ENCODE measurements at regions of chr17 and their contacts with region 1.

Region 1: GRCh38 chr17:5111402-5112204 is at the start of gene ZNF232:
- DNase-seq: peak; percentile 88 to 96
- H3K4me3 ChIP-seq: peak within 1 kb of the TSS; percentile 70 to 79 (median 74)
- H3K27ac ChIP-seq: peak within 1 kb of the TSS; percentile 35; the same call in 1 of the 2 replicates
- H3K4me1 ChIP-seq: peaks cover 0 to 5% (median 2%) of the 10 kb centered on the region in 4 experiments; a peak in 2 of 7 replicates
- H3K27me3 ChIP-seq: no peaks in the 10 kb centered on the region
- CTCF ChIP-seq: 0 out of 4 replicates have a peak, but pooled peaks of 1 of the 3 experiments have one; percentile 5
- EP300 ChIP-seq: 0 out of 3 replicates have a peak, but pooled peaks of 1 of the 2 experiments have one; percentile 2
- POLR2A ChIP-seq: peak; percentile 71 to 88
- RAD21 ChIP-seq: no peak
- total RNA-seq, gene ZNF232: 39.8 and 41.0 TPM in 2 replicates

Region 2: DNA sequence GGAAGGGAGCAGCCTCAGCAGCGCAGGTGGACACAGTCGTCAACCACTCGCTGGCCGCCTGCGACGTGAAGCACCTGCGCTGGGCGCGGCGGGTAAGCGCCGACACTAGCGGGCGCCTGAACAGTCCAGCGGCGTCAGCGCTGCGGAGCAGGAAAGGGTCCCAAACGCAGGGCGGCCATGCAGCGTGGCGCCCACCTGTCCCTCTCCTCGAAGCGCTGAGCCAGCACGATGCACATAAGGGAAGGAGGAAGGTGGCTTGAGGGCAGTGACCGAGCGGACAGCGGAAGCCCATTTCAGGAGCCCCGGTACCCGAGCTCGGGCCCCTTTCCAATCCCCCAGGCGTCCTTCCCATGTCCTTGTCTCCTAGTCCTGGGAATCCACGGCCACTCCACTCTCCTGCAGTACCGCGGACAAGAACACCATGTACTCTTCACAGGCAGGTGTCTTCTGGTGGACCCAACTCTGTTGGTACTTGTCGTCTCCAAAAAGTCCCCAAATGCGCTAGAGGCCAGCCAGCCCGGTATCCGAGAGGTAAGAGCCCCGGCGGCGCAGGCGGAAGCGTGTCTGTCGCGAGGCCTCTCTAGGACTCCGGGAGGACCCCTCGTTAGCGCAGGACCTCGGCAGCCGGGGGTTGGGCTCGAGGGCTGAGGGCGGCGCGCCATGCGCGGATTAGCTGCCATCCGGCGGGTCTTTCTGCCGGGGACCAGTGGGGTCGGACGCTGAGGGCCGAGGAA is 14.3 kb before region 1 on chr17:
- CTCF ChIA-PET with region 1: interaction called, 4 read pairs
- POLR2A ChIA-PET with region 1: interaction called, 20 read pairs
- DNase-seq: peak; percentile 69 to 91
- H3K4me3 ChIP-seq: peak overlapping the region; percentile 59 to 79 (median 64)
- H3K27ac ChIP-seq: no peak overlapping the region
- H3K4me1 ChIP-seq: no peaks in the 10 kb centered on the region
- H3K27me3 ChIP-seq: peaks cover 0 to 15% (median 9%) of the 10 kb centered on the region in 4 experiments; a peak in 6 of 7 replicates
- CTCF ChIP-seq: no peak
- EP300 ChIP-seq: no peak
- POLR2A ChIP-seq: no peak; a peak in 1 of 3 replicates
- RAD21 ChIP-seq: 0 out of 4 replicates have a peak, but pooled peaks of 1 of the 2 experiments have one; percentile 10

Region 3: DNA sequence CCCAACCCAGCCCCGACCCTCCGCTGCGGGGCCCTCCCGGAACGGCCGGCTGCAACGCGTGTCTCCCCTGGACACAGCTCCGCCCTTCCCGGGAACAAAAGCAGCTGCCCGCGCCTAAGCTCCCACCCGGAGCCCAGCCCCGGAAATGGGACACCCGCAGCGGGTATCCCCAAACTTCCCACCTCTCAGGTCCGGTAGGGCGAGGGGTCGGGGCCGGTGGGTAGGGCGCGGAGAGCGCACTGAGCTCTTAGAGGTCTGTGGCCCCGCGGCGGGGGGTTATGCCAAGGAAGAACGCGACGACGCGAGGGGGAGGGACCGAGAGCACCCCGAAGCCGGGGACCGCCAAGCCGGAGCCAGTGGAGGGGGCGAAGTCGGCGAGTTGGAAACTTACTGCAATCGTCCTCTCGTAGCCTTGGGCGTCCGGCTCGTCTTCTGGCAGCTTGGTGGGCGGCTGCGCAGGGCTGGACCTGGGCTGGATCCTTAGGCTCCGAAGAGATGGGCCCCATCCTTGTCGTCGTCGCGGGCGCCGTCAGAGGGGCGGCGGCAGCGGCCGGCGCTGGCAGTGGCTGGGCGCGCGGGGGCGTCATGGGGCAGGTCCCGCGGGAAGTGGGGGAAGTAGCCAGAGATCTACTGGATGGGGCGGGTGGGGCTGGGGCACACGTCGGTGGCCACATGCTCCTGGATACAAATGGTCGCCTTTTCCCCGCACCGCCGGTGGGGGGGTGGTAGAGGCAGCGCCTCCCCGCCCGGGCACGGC is 11.2 kb after region 1 on chr17:
- CTCF ChIA-PET with region 1: interaction called, 3 read pairs
- POLR2A ChIA-PET with region 1: interaction called, 28 read pairs
- DNase-seq: peak in 1 of 2 experiments; percentile 75
- H3K4me3 ChIP-seq: peak overlapping the region; percentile 54 to 74 (median 60)
- H3K27ac ChIP-seq: no peak overlapping the region
- H3K4me1 ChIP-seq: peaks cover 0 to 5% (median 2%) of the 10 kb centered on the region in 4 experiments; a peak in 3 of 7 replicates
- H3K27me3 ChIP-seq: peaks cover 0 to 26% (median 15%) of the 10 kb centered on the region in 4 experiments; a peak in 6 of 7 replicates
- CTCF ChIP-seq: 0 out of 4 replicates have a peak, but pooled peaks of 1 of the 3 experiments have one; percentile 1
- EP300 ChIP-seq: no peak
- POLR2A ChIP-seq: no peak
- RAD21 ChIP-seq: no peak

Region 4: GRCh38 chr17:5164436-5164835 is 52.8 kb after region 1 on chr17:
- CTCF ChIA-PET with region 1: no interaction called
- POLR2A ChIA-PET with region 1: no interaction called
- DNase-seq: no peak
- H3K4me3 ChIP-seq: no peak overlapping the region
- H3K27ac ChIP-seq: no peak overlapping the region
- H3K4me1 ChIP-seq: no peaks in the 10 kb centered on the region
- H3K27me3 ChIP-seq: no peaks in the 10 kb centered on the region
- CTCF ChIP-seq: no peak
- EP300 ChIP-seq: no peak
- POLR2A ChIP-seq: no peak
- RAD21 ChIP-seq: no peak

Region 5: DNA sequence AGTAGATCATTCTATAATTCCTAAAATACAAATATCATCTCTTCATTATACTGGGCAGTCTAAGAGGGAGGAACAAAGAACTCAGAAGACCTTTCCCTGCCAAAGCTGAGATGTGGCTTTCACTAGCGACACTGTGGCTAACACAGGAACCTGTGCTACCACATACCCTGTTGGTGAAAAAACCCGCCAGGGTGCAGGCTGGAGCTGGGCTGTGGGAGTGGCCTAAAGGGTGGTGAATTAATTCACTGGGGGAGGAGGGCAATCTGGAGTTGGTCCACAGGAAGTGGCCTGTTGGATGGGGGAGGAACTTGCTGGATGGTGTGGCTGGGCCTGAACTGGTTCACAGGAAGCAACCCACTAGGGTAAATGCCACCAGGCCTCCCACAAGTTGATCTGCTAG is 72.7 kb after region 1 on chr17:
- CTCF ChIA-PET with region 1: interaction called, 3 read pairs
- POLR2A ChIA-PET with region 1: interaction called, 10 read pairs
- DNase-seq: no peak
- H3K4me3 ChIP-seq: peak overlapping the region in 1 of 4 experiments; percentile 18; a peak in 1 of 8 replicates
- H3K27ac ChIP-seq: no peak overlapping the region
- H3K4me1 ChIP-seq: no peaks in the 10 kb centered on the region
- H3K27me3 ChIP-seq: no peaks in the 10 kb centered on the region
- CTCF ChIP-seq: no peak
- EP300 ChIP-seq: no peak
- POLR2A ChIP-seq: no peak
- RAD21 ChIP-seq: no peak

Region 6: DNA sequence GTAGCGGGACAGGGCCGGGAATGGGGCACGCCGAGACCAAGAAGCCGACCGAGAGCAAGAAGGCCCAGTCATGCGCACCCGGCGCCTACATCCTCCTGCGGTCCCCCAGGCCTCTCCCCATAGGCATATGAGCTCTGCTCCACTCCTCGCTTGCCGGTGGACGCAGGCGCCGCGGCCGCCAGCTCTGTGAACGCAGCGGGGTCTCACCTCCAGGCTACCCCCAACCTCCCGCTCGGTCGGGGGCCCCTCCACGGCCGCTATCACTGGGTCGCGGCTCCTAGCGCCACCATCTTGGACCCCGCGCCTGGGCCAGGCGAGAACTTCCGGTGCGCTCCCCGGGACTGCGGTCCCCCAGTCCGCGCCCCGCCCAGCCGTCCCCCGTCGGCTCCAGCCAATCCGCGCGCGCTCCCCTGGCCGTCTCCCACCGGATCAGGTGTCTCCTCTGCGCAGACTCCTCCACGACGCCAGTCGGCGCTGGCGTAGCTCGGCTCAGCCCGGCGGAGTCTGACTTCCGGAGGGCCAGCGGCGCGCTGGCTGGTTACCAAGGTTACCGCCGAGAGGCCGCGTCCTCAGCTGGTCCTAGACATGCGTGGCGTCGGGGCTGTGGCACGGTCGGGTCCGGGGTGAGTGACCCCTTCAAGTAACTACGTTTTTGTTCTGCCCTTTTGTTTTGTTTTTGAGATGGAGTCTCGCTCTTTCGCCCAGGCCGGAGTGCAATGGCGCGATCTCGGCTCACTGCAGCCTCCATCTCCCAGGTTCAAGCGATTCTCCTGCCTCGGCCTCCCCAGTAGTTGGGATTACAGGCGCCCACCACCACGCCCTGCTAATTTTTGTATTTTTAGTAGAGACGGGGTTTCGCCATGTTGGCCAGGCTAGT is 80.2 kb after region 1 on chr17 and contains the start of gene ZNF594:
- CTCF ChIA-PET with region 1: no interaction called
- POLR2A ChIA-PET with region 1: interaction called, 10 read pairs
- DNase-seq: peak; percentile 85 to 98
- H3K4me3 ChIP-seq: peak within 1 kb of the TSS; percentile 64 to 92 (median 80)
- H3K27ac ChIP-seq: peak within 1 kb of the TSS; percentile 73; the same call in 1 of the 2 replicates
- H3K4me1 ChIP-seq: peaks cover 0 to 3% (median 0%) of the 10 kb centered on the region in 4 experiments; a peak in 2 of 7 replicates
- H3K27me3 ChIP-seq: no peaks in the 10 kb centered on the region; a peak in 1 of 7 replicates
- CTCF ChIP-seq: peak; percentile 77 to 88 (median 81)
- EP300 ChIP-seq: no peak
- POLR2A ChIP-seq: peak; percentile 78 to 90
- RAD21 ChIP-seq: peak in 1 of 2 experiments; percentile 32; a peak in 3 of 4 replicates
- total RNA-seq, gene ZNF594: 14.3 and 15.5 TPM in 2 replicates

Measured in H1 (cell line).